Left ventricle myocardium superior (tissue), 1 donor: ENCODE measurements at regions of chr10 and their contacts with region 1.

Region 1: DNA sequence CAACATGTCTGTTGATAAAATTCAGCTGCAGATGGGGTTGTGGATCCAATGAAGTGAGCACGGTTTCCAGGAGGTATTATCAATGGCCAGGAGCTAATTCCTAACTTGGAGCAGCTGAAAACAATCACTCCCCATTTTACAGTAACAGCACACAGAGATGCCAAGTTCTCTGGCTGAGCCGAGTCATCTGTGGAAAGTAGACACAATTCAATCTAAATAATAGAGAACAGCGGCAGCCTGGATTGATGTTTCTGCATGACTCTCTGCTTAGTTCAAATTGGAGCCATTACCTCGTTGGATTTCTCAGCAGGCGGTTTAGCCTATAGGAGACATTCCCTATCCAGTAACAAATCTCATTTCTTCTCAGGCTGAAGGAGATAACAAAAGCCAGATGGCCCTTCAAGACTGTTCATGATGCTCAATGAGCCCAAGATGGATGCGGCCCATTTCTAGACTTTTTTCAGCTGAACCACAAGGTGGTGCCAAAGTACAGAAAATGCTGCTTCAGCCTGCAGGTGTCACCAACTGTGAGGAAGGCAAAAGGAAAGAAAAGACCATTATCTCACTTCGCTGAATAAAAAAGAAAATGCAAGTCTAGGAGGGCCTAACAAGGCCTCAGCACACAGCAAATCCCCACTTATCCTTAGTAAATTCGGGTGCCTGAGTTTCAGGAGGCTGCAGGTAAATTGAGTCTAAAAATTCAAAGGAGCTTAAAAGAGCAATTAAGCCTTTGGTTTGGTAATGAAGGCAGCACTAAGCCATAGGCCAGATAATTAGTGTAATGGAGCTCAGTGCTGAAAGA is 83.7 kb downstream of the SLC16A9 start:
- DNase-seq: no peak
- ATAC-seq: peak; percentile 79

Region 2: GRCh38 chr10:58555170-58555929 is 1070.6 kb before region 1 on chr10:
- intact Hi-C with region 1: no loop called
- DNase-seq: no peak
- ATAC-seq: no peak

Region 3: DNA sequence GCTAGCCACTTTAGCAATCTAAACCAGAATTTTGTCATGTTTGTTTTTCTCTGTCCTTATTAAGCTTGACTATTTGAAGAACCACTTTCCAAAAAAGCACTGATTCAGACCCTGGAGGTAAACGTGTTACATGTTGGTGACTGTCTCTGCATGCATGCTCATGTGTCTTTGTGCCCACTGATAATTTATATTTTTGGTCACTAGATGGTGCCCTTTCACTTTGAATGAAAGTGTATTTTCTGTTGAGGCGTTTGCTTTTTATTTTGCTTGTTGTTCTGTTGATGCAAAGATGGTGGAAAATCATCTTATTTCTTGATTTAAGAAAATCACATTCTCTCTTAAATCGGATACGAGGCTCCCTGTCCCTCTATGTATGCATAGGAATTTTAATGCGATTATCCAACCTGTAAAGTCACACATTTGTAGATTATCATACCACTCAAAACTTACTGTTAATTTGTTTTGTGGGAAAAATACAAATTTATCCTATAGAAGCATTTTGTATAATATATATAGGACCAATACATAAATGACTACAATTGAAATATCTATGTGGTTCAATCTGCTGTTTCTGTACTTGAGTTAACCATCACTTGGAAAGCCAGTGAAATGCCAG is 843.9 kb before region 1 on chr10:
- intact Hi-C with region 1: loop called (anchors 5 kb)
- DNase-seq: no peak
- ATAC-seq: peak; percentile 44

Region 4: GRCh38 chr10:59240582-59241183 is 385.2 kb before region 1 on chr10:
- intact Hi-C with region 1: loop called (anchors 5 kb)
- DNase-seq: no peak
- ATAC-seq: no peak

Region 5: DNA sequence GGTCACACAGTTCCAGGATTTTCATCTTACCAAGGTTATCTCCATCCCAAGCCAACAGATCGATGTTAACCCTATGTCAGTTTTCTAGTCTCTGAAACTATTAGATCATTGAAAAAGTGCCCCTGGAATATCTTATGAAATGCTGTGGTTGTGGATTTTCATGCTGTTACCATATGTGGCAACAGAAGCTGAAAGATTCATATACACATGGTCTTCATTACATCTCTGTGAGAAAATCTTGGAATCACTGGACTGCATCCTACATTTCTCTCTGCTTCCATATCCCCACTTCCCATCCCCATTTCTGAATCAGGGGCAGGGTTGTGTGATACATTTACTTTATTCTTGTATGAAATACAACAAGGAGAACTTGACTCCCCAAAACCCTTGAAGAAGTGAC is 62.4 kb before region 1 on chr10:
- intact Hi-C with region 1: no loop called
- DNase-seq: no peak
- ATAC-seq: no peak

Region 6: DNA sequence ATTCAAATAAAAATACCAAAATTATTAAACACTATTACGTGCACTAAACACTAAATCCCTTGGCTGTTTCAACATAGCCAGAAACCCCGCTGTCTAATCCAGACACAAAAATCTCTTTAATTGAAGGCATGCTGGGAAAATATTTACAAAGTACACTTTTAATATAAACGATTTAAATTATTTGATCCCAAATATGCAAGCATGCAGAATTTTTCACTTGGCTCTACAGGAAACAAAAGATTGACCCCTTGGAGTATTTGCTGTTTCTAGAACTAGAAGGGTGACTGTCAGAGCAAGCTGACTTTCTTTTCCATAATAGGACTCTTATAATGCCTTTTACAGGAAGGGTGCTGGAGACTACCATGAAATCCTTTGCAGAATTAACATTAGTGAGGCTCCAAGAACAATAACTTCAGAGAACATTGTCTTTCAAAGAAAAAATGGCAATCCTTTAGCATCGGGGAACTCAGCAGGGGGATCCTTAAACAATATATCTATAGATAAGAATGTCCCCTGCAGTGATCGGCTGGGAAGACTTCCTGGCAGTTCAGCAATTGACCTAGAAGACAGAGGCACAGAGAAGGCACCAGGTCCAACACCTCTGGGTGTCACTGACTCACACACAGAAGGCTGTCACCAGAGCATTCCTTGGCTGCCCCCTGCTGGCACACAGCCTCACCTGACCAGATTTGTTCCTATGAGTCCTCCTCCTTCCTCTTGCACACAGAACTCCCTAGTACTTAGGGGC is 183.1 kb after region 1 on chr10:
- intact Hi-C with region 1: loop called (anchors 10 kb)
- DNase-seq: peak; percentile 82
- ATAC-seq: peak; percentile 81

Region 7: DNA sequence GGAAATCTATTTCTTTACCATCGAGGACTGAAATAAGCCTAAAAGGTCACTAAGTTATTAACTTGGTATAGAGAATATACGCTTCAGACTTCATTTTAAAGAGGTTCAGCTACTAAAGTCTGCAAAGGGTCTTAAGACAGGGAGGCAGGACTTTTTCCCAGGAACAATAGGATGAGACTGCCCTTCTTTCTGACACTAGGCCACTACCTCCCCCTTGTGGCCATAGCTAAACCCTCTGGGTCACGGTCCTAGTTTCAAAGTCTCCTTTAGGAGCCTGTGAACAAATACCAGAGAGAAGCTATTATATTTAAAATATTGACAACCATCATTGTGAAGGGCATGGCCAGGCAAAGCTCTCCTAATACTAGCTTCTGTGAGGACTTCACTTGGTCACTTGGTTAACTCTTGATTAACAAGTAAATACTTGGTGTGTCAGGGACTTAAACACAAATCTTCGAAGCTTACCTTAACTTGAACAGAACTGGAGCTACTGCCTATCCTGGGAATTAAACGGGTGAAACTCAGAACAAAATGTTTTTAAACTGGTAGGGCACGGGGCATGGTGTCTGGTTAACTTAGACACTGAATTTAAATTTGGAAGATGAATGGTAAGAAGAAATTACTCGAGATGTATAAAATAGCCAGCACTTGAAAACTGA is 204.8 kb after region 1 on chr10:
- intact Hi-C with region 1: loop called (anchors 5 kb)
- DNase-seq: no peak
- ATAC-seq: peak; percentile 74

Region 8: GRCh38 chr10:60032723-60033122 is 406.8 kb after region 1 on chr10:
- intact Hi-C with region 1: loop called (anchors 10 kb)
- DNase-seq: no peak
- ATAC-seq: peak; percentile 91

Region 9: GRCh38 chr10:60096761-60097513 is 471.0 kb after region 1 on chr10:
- intact Hi-C with region 1: no loop called
- DNase-seq: no peak
- ATAC-seq: no peak